HepG2 (cell line): ENCODE measurements at regions of chr6 and their contacts with region 1.

Region 1: DNA sequence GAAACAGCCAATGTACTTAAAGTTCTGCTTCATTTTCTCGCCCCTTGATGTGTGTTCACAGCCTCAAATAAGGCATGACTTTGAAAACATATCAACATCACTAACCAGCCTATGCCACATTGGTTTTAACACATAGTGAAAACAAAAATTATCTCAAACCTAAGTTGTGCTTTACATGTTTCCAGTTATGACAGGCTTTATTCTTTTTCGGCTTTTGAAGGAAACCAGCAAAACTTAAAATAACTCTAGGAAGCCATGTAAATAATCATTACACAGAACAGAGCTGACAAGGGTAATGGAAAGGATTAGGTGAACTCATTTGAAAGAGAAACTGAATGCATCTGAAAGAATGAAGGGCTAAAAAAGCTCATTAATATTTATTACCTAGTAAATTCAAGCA is 42.1 kb downstream of the BMP5 start:
- DNase-seq: no peak
- ATAC-seq: no peak
- H3K4me3 ChIP-seq: no peak overlapping the region
- H3K27ac ChIP-seq: no peak overlapping the region
- H3K4me1 ChIP-seq: no peaks in the 10 kb centered on the region; the same call in 1 of the 2 replicates
- H3K27me3 ChIP-seq: no peaks in the 10 kb centered on the region; a peak in 1 of 5 replicates
- CTCF ChIP-seq: no peak
- EP300 ChIP-seq: no peak
- POLR2A ChIP-seq: no peak
- RAD21 ChIP-seq: no peak

Region 2: DNA sequence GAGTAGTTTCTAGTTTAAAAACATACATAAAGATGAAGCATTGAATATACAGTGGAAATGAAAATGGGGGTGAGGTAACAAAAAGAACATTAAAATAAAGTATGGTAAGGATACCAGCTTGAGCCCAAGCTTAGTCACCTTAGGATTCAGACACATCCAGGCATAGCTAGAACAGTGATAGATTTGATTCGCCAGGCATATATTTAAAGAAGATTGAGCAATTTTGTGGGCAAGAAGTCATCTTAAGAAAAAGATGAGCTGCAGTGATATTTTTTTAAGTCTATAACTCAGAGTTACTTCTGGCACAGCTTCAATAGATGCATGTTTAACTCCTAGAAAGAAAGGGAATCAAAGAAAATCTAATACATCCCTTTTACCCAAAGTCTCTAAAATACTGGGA is 55.8 kb before region 1 on chr6:
- CTCF ChIA-PET with region 1: no interaction called
- POLR2A ChIA-PET with region 1: no interaction called
- in situ Hi-C with region 1: loop called (anchors 10 kb)
- intact Hi-C with region 1: no loop called
- DNase-seq: no peak
- ATAC-seq: no peak
- H3K4me3 ChIP-seq: no peak overlapping the region
- H3K27ac ChIP-seq: no peak overlapping the region
- H3K4me1 ChIP-seq: no peaks in the 10 kb centered on the region
- H3K27me3 ChIP-seq: no peaks in the 10 kb centered on the region
- CTCF ChIP-seq: no peak
- EP300 ChIP-seq: no peak
- POLR2A ChIP-seq: no peak
- RAD21 ChIP-seq: no peak